ENCODE measurements at regions of chr13 and their contacts with region 1.

Region 1: GRCh38 chr13:33723772-33724435 is 94.0 kb upstream of the RFC3 start:
- DNase-seq: peak; percentile 47 to 75
- H3K4me3 ChIP-seq: no peak overlapping the region
- H3K27ac ChIP-seq: no peak overlapping the region
- H3K4me1 ChIP-seq: peaks cover 7% of the 10 kb centered on the region; the same call in 1 of the 2 replicates
- H3K27me3 ChIP-seq: no peaks in the 10 kb centered on the region
- CTCF ChIP-seq: peak; percentile 83

Region 2: GRCh38 chr13:33375421-33375955 is 348.4 kb before region 1 on chr13:
- CTCF ChIA-PET with region 1: no interaction called
- POLR2A ChIA-PET with region 1: interaction called, 10 read pairs
- intact Hi-C with region 1: no loop called
- DNase-seq: no peak
- H3K4me3 ChIP-seq: no peak overlapping the region
- H3K27ac ChIP-seq: no peak overlapping the region
- H3K4me1 ChIP-seq: no peaks in the 10 kb centered on the region
- H3K27me3 ChIP-seq: no peaks in the 10 kb centered on the region
- CTCF ChIP-seq: no peak

Region 3: DNA sequence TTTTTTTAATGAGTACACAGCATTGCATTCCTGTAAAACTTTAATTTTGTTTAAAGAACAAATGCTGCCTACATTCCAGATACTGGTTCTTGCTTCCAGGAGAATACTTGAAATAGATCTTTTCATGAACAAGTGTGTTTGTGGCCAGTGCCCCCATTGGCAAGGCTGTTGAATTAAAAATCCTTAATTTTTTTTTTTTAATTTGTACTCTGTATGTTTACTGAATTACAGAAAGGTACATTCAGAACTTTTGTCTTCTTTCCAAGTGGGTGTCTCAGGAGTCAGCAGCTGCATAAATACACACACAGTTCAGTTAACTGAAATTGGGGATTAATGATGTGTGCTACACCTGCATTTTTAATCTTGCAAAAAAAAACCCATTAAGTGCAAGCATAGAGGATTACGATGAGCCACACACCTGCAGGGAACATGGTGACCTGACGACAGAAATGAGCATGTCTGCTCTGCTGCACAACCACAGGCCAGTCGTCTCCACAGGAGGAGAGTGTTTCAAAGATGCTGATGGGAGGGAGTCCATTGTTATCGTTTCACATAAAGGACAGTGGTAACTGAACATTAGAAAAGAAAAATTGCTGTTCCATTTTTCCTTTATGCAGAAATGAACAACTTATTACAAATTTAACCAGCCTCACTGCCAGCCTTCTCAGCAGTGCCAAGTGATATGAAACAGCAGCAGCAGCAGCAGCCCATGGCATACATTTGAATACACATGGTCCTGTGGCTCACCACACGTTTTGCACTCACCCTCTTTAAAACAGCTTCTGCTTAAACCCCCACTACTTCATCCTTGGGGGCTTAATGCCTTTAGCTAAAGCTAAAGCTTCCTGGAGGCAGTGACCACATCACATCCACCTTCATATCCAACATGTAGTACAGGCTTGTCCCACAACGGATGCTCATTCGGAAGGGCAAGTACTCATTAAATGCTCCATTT is 21.7 kb after region 1 on chr13:
- CTCF ChIA-PET with region 1: no interaction called
- POLR2A ChIA-PET with region 1: no interaction called
- intact Hi-C with region 1: no loop called
- DNase-seq: no peak
- H3K4me3 ChIP-seq: no peak overlapping the region
- H3K27ac ChIP-seq: no peak overlapping the region
- H3K4me1 ChIP-seq: 0 out of 2 replicates have a peak, but pooled peaks cover 4% of the 10 kb centered on the region
- H3K27me3 ChIP-seq: no peaks in the 10 kb centered on the region
- CTCF ChIP-seq: no peak